ENCODE measurements at regions of chr2 and their contacts with region 1.

Region 1: DNA sequence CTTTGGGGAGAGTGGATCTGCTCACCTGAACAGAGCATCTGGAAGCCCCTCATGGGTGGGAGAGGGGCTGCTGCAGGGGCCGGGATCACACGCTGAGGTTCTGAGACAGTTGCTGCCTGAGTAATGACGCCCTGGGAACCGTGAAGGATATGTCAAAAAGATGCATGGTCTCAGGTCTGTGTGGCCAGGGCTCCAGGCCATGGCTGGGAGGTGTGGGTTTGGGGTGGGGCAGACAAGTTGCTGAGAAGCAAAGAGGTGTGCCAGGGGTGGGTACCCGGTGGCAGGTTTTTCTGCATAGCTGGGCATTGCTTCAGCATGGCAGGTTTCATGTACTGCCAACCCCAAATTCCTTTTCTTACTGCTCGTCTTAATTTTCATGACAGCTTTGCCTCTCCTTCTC is 133.5 kb downstream of the RPIA start:
- DNase-seq: no peak
- H3K4me3 ChIP-seq: no peak overlapping the region
- H3K27ac ChIP-seq: no peak overlapping the region
- H3K4me1 ChIP-seq: no peaks in the 10 kb centered on the region
- H3K27me3 ChIP-seq: no peaks in the 10 kb centered on the region
- CTCF ChIP-seq: no peak
- POLR2A ChIP-seq: no peak

Region 2: GRCh38 chr2:88212251-88212790 is 612.6 kb before region 1 on chr2:
- intact Hi-C with region 1: no loop called
- DNase-seq: no peak
- H3K4me3 ChIP-seq: no peak overlapping the region
- H3K27ac ChIP-seq: no peak overlapping the region
- H3K4me1 ChIP-seq: no peaks in the 10 kb centered on the region
- H3K27me3 ChIP-seq: no peaks in the 10 kb centered on the region
- CTCF ChIP-seq: peak in 1 of 4 experiments; percentile 19
- POLR2A ChIP-seq: no peak

Region 3: GRCh38 chr2:88838165-88838635 is 13.2 kb after region 1 on chr2:
- intact Hi-C with region 1: loop called (anchors 2 kb)
- DNase-seq: no peak
- H3K4me3 ChIP-seq: no peak overlapping the region
- H3K27ac ChIP-seq: no peak overlapping the region
- H3K4me1 ChIP-seq: no peaks in the 10 kb centered on the region
- H3K27me3 ChIP-seq: no peaks in the 10 kb centered on the region
- CTCF ChIP-seq: no peak
- POLR2A ChIP-seq: no peak